Calu3 (cell line): ENCODE measurements at regions of chr2 and their contacts with region 1.

Region 1: GRCh38 chr2:109632158-109632789 is 18.1 kb downstream of the SOWAHC start:
- DNase-seq: peak; percentile 26
- H3K4me3 Mint-ChIP-seq: no peak overlapping the region
- H3K27ac Mint-ChIP-seq: no peak overlapping the region
- H3K4me1 Mint-ChIP-seq: peaks cover 40% of the 10 kb centered on the region
- H3K27me3 Mint-ChIP-seq: no peaks in the 10 kb centered on the region
- CTCF ChIP-seq: no peak

Region 2: DNA sequence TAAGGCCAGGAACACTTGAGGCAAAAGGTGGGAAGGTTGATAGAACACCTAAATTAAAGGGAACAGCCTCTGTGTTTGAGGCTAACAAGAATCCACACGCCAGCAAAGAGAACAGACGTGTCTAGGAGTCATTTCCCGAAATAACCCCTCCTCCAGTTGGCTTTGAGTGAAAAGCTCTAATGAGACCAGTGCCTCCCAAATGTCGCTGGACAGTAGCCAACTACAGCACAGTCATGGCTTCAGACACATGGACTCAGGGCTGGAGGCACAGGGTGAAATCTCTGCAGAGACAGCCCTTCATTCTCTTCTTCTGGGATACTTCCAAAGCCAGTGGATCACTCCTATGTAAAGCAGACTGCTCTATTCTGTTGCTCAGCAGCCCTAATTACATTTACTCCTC is 31.4 kb after region 1 on chr2:
- CTCF ChIA-PET with region 1: no interaction called
- intact Hi-C with region 1: no loop called
- DNase-seq: no peak
- H3K4me3 Mint-ChIP-seq: no peak overlapping the region
- H3K27ac Mint-ChIP-seq: no peak overlapping the region
- H3K4me1 Mint-ChIP-seq: no peaks in the 10 kb centered on the region
- H3K27me3 Mint-ChIP-seq: peaks cover 9% of the 10 kb centered on the region
- CTCF ChIP-seq: no peak

Region 3: GRCh38 chr2:109699646-109700045 is 67.4 kb after region 1 on chr2:
- CTCF ChIA-PET with region 1: no interaction called
- intact Hi-C with region 1: loop called (anchors 5 kb)
- DNase-seq: peak; percentile 29
- H3K4me3 Mint-ChIP-seq: peak overlapping the region; percentile 8
- H3K27ac Mint-ChIP-seq: peak overlapping the region; percentile 46
- H3K4me1 Mint-ChIP-seq: peaks cover 69% of the 10 kb centered on the region
- H3K27me3 Mint-ChIP-seq: no peaks in the 10 kb centered on the region
- CTCF ChIP-seq: no peak